ENCODE measurements at regions of chr12 and their contacts with region 1.

Region 1: GRCh38 chr12:27821259-27821973 is 41.4 kb upstream of the MANSC4 start:
- DNase-seq: no peak
- H3K4me3 ChIP-seq: no peak overlapping the region
- CTCF ChIP-seq: peak; percentile 55

Region 2: GRCh38 chr12:27794818-27795584 is 26.4 kb before region 1 on chr12:
- CTCF ChIA-PET with region 1: interaction called, 12 read pairs
- POLR2A ChIA-PET with region 1: no interaction called
- DNase-seq: no peak
- H3K4me3 ChIP-seq: no peak overlapping the region
- CTCF ChIP-seq: no peak

Region 3: DNA sequence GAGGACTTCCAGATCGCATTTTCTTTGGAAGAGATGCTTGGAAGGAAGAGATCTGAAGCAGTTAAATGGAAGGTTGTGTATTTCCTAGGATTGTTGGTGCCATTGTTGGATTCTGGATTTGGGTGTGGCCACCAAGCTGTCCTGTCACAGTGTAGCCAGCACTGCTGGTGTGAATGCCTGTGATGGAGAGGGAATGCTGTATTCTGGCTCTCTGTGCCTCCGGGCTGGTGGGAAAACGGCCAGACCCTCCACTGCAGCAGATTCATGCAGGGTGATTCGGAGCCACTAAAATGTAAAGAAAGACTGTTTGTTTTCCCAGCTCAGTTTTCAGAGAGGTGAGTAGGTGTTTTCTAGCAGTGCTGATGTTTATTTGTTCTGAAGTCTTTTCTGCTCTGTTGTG is 10.7 kb before region 1 on chr12:
- CTCF ChIA-PET with region 1: interaction called, 59 read pairs
- POLR2A ChIA-PET with region 1: no interaction called
- DNase-seq: no peak
- H3K4me3 ChIP-seq: no peak overlapping the region
- CTCF ChIP-seq: no peak

Region 4: DNA sequence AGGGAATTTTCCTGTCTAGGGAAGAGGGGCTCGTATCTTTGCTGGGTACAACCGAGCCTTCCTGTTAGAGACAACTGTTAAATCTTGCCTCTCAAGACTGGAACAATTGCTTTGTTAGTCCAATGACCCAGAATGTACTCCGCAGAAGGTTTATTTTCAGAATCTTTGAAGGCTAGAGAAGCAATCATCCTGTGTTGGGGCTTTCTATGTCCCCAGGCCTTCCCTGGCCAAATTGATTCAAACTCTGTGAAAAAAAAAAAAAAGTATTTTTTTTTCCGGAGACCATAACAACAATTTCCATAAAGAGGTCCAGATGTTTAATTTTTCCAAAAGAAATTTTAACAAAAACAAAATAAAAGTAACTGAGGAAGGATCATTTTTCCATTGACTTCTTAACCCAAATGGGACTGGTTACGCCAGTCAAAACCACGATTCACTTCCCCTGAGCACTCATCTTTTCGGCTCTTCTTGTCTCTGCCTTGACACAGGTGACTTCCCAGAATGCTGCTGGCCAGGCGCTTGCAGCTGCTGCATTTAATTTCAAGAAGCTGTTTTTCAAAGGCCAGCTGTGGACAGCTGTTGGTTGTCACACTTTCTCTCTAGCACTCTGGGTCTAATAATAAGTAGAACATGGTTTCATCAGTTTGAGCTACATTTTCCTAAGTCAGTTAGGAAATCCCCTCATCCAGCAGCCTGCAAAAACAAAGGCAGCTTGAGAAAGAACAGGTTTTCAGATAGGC is 40.2 kb after region 1 on chr12:
- CTCF ChIA-PET with region 1: interaction called, 10 read pairs
- POLR2A ChIA-PET with region 1: no interaction called
- DNase-seq: no peak
- H3K4me3 ChIP-seq: no peak overlapping the region
- CTCF ChIP-seq: no peak